ENCODE measurements at regions of chr9 and their contacts with region 1.

Region 1: DNA sequence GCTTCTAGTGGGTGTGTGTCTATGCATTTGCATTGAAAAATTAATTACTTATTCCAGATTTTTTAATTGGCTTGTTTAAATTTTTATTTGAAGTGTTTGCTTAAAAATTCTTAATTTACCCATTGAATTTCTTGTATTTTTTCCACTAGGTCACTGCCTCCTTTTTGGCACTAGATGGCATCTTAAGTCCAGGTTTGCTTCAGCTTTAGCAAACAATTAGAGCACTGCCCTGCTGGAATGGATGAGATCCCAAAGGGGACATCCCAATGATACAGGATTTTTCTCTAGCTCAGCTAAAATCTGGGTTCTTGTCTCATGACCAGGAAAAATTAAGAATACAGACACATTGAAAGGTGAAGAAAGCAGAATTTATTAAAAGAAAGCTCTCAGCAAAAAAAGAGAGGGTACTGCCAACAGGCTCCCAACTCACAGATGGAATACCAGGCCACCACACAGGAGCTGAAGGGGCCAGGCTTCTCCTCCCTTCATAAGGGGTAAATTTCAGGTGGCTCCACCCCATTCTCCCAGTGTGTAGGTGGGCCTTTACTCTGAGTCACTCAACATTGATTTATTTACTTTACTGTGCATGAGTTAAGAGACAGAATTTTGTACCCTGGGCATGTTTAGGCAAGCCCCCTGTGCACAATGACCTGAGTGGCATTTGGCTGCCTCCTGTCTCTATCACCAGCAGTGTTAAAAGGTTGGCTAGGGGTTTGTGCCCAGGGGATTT is 532.4 kb downstream of the ANXA1 start:
- DNase-seq: peak in 1 of 4 experiments; percentile 21
- ATAC-seq: no peak
- H3K4me3 ChIP-seq: no peak overlapping the region
- H3K27ac ChIP-seq: no peak overlapping the region
- H3K4me1 ChIP-seq: no peaks in the 10 kb centered on the region
- H3K27me3 ChIP-seq: no peaks in the 10 kb centered on the region
- CTCF ChIP-seq: peak in 2 of 3 experiments; percentile 39 to 59; a peak in 4 of 6 replicates
- EP300 ChIP-seq: no peak
- POLR2A ChIP-seq: no peak
- RAD21 ChIP-seq: peak; percentile 53 to 55

Region 2: GRCh38 chr9:74570879-74571512 is 887.0 kb after region 1 on chr9:
- CTCF ChIA-PET with region 1: interaction called, 3 read pairs
- POLR2A ChIA-PET with region 1: no interaction called
- in situ Hi-C with region 1: no loop called
- intact Hi-C with region 1: loop called (anchors 1 kb)
- DNase-seq: peak; percentile 11 to 21 (median 13)
- ATAC-seq: peak; percentile 54; the same call in 1 of the 3 replicates
- H3K4me3 ChIP-seq: no peak overlapping the region
- H3K27ac ChIP-seq: no peak overlapping the region
- H3K4me1 ChIP-seq: no peaks in the 10 kb centered on the region
- H3K27me3 ChIP-seq: no peaks in the 10 kb centered on the region
- CTCF ChIP-seq: peak; percentile 36 to 65 (median 45); a peak in 5 of 6 replicates
- EP300 ChIP-seq: no peak
- POLR2A ChIP-seq: no peak
- RAD21 ChIP-seq: peak; percentile 41 to 64; a peak in 3 of 4 replicates

Region 3: GRCh38 chr9:74742792-74743730 is 1059.0 kb after region 1 on chr9:
- CTCF ChIA-PET with region 1: no interaction called
- POLR2A ChIA-PET with region 1: no interaction called
- in situ Hi-C with region 1: loop called (anchors 25 kb)
- intact Hi-C with region 1: loop called (anchors 10 kb)
- DNase-seq: peak; percentile 8 to 23 (median 10)
- ATAC-seq: 0 out of 3 replicates have a peak, but pooled peaks have one; percentile 39
- H3K4me3 ChIP-seq: no peak overlapping the region
- H3K27ac ChIP-seq: no peak overlapping the region
- H3K4me1 ChIP-seq: no peaks in the 10 kb centered on the region
- H3K27me3 ChIP-seq: no peaks in the 10 kb centered on the region
- CTCF ChIP-seq: peak; percentile 34 to 56 (median 54); a peak in 4 of 6 replicates
- EP300 ChIP-seq: no peak
- POLR2A ChIP-seq: no peak
- RAD21 ChIP-seq: peak; percentile 53 to 56

Measured in K562 (cell line).